CD8-positive, alpha-beta memory T cell (primary cell): ENCODE measurements at regions of chr2 and their contacts with region 1.

Region 1: GRCh38 chr2:203718087-203718486 is 11.6 kb downstream of the CD28 start:
- DNase-seq: peak; percentile 18 to 76 (median 69)
- H3K4me3 ChIP-seq: peak overlapping the region; percentile 32
- H3K4me3 Mint-ChIP-seq: peak overlapping the region; percentile 68 to 80 (median 77)
- H3K27ac ChIP-seq: peak overlapping the region; percentile 34
- H3K27ac Mint-ChIP-seq: peak overlapping the region; percentile 80 to 99 (median 92)
- H3K4me1 ChIP-seq: peaks cover 99% of the 10 kb centered on the region
- H3K4me1 Mint-ChIP-seq: peaks cover 94 to 99% (median 99%) of the 10 kb centered on the region in 3 donors
- H3K27me3 ChIP-seq: no peaks in the 10 kb centered on the region
- H3K27me3 Mint-ChIP-seq: peaks cover 0 to 4% of the 10 kb centered on the region in 2 donors

Region 2: DNA sequence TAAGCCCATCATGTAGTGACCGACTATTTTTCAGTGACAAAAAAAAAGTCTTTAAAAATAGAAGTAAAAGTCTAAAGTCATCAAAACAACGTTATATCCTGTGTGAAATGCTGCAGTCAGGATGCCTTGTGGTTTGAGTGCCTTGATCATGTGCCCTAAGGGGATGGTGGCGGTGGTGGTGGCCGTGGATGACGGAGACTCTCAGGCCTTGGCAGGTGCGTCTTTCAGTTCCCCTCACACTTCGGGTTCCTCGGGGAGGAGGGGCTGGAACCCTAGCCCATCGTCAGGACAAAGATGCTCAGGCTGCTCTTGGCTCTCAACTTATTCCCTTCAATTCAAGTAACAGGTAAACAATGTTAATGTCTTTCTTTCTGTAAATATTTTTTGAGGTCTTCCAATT is 11.7 kb before region 1 on chr2 and contains the start of gene CD28:
- CTCF ChIA-PET with region 1: interaction called, 63 read pairs
- POLR2A ChIA-PET with region 1: interaction called, 21 read pairs
- DNase-seq: peak; percentile 79 to 95 (median 94)
- H3K4me3 ChIP-seq: peak within 1 kb of the TSS; percentile 94
- H3K4me3 Mint-ChIP-seq: peak within 1 kb of the TSS; percentile 85 to 96 (median 93)
- H3K27ac ChIP-seq: peak within 1 kb of the TSS; percentile 80
- H3K27ac Mint-ChIP-seq: peak within 1 kb of the TSS; percentile 89 to 100 (median 98)
- H3K4me1 ChIP-seq: peaks cover 33% of the 10 kb centered on the region
- H3K4me1 Mint-ChIP-seq: peaks cover 55 to 72% (median 58%) of the 10 kb centered on the region in 3 donors
- H3K27me3 ChIP-seq: no peaks in the 10 kb centered on the region
- H3K27me3 Mint-ChIP-seq: no peaks in the 10 kb centered on the region
- total RNA-seq, gene CD28: 64.1 to 66.4 TPM

Region 3: GRCh38 chr2:203732092-203732952 is 14.2 kb after region 1 on chr2:
- CTCF ChIA-PET with region 1: interaction called, 7 read pairs
- POLR2A ChIA-PET with region 1: interaction called, 14 read pairs
- DNase-seq: no peak
- H3K4me3 ChIP-seq: peak overlapping the region; percentile 14
- H3K4me3 Mint-ChIP-seq: peak overlapping the region in 6 of 7 donors; percentile 7 to 50 (median 34)
- H3K27ac ChIP-seq: no peak overlapping the region
- H3K27ac Mint-ChIP-seq: peak overlapping the region; percentile 63 to 93 (median 78)
- H3K4me1 ChIP-seq: peaks cover 71% of the 10 kb centered on the region
- H3K4me1 Mint-ChIP-seq: peaks cover 72 to 92% (median 91%) of the 10 kb centered on the region in 3 donors
- H3K27me3 ChIP-seq: no peaks in the 10 kb centered on the region
- H3K27me3 Mint-ChIP-seq: no peaks in the 10 kb centered on the region

Region 4: GRCh38 chr2:203740780-203741281 is 22.7 kb after region 1 on chr2:
- CTCF ChIA-PET with region 1: interaction called, 48 read pairs
- POLR2A ChIA-PET with region 1: interaction called, 85 read pairs
- DNase-seq: peak in 3 of 5 donors; percentile 59 to 85 (median 77)
- H3K4me3 ChIP-seq: peak overlapping the region; percentile 29
- H3K4me3 Mint-ChIP-seq: peak overlapping the region; percentile 7 to 75 (median 65)
- H3K27ac ChIP-seq: peak overlapping the region; percentile 52
- H3K27ac Mint-ChIP-seq: peak overlapping the region; percentile 79 to 97 (median 93)
- H3K4me1 ChIP-seq: peaks cover 81% of the 10 kb centered on the region
- H3K4me1 Mint-ChIP-seq: peaks cover 71 to 90% (median 82%) of the 10 kb centered on the region in 3 donors
- H3K27me3 ChIP-seq: no peaks in the 10 kb centered on the region
- H3K27me3 Mint-ChIP-seq: no peaks in the 10 kb centered on the region